ENCODE measurements at regions of chr2 and their contacts with region 1.

Region 1: DNA sequence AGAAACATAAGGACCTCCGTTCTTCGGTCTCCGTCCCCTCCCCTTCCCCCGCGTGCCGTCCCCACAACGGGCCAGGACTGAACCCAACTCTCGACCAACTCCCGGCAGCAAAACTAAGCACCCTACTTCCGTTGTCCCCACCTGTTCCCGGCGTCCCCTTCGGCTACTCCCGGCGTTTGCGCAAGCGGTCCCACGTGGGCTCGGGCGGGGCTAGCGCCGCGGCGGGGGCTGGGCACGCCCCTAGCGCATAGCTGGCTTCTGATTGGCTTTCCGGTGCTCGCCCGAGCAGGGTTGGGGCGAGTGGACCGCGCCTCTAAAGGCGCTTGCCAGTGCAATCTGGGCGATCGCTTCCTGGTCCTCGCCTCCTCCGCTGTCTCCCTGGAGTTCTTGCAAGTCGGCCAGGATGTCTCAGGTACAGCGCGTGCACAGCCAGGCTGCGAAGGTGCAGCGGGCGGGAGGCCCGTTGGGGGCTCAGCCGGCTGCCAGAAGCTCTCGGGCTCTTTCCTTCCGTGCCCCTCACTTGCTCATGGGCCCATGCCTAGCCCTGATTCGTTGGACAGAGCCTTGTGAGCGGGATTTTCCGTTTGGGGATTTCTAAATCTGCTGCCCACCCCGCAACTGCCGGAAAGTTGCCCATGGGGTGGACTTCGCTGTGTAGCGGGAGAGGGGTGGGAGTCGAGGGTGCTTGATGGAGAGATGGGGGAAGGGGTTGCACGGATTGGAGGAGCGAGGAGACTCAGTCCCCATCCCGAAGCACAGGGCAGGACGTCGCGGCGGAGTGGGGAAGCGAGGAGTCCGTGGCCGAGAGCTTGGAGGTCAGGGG is at the starts of genes C2orf76 and DBI:
- DNase-seq: peak; percentile 94
- ATAC-seq: peak; percentile 92
- H3K4me3 Mint-ChIP-seq: peak within 1 kb of the TSS; percentile 100
- H3K27ac Mint-ChIP-seq: peak within 1 kb of the TSS; percentile 100
- H3K4me1 Mint-ChIP-seq: peaks cover 50% of the 10 kb centered on the region
- H3K27me3 Mint-ChIP-seq: no peaks in the 10 kb centered on the region
- CTCF ChIP-seq: no peak
- total RNA-seq, gene C2orf76: 9.6 to 11.5 TPM
- total RNA-seq, gene DBI: 142 to 143 TPM

Region 2: DNA sequence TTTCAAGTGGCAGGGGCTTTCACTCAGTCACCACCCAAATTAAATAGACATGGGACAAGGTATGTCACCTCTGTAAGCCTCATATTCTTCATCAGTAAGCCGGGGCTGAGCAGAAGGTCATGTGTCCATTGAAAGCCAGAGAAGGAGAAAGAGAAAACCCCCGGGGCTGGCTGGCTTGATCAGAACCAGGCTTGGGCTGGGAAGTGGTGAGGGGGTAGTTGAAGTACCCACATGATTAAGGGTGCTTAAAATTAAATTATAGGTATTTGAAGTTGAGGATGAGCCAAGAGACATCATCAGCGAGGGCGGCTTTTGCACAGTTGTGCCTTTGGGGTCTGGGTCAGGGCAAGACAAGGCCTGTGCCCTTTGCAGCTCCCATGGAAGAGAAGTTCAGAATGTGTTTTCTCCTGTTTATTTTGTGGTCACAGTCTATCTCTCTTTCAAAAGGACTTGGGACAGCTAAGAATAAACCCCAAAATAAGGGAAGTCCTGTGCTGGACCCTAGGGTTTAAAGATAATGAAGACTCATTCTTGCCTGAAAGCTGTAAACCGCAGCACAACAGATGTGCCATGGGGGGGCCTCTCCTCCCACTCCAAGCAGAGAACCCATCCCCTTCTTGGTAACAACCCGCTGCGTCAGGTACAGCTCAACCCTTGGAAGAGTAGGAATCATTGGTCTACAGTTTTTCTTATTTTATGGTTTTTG is 10.6 kb after region 1 on chr2:
- CTCF ChIA-PET with region 1: no interaction called
- POLR2A ChIA-PET with region 1: interaction called, 12 read pairs
- intact Hi-C with region 1: no loop called
- DNase-seq: no peak
- ATAC-seq: no peak
- H3K4me3 Mint-ChIP-seq: no peak overlapping the region
- H3K27ac Mint-ChIP-seq: no peak overlapping the region
- H3K4me1 Mint-ChIP-seq: no peaks in the 10 kb centered on the region
- H3K27me3 Mint-ChIP-seq: peaks cover 3% of the 10 kb centered on the region
- CTCF ChIP-seq: no peak

Region 3: DNA sequence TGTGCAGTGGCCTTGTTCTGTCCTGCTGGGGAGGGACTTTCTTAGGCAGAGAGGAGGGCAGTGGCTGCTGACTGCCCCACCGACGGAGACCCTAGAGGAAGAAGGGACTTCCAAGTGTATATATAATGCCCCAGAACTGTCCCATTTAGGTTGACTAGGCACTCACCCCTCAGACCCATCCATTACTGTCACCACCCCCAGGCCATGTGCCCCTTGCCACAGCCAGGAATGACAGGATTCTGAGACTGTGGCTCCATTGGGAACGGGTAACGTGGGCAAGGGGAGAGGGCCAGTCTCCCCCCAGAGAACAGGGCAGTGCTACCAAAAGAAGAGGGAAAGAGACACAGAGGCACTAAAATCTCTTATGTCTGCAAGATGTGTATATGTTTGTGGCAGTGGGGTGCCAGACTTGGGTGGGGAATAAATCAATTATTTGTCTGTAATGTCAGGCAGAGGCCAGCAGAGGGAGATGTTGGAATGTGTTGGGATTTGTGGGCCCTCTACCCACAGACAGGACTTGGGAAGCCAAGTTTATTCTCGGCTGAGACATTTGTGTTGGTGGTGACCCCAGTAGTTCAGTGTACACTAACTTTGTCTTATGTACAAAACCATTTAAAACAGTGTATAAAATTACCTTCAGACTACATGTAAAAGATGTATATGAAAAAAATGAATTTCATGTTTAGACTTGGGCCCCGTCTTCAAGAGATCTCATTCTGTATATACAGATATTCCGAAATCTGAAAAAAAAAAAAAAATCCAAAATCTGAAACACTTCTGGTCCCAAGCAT is 40.8 kb after region 1 on chr2:
- CTCF ChIA-PET with region 1: no interaction called
- POLR2A ChIA-PET with region 1: no interaction called
- intact Hi-C with region 1: no loop called
- DNase-seq: peak; percentile 42
- ATAC-seq: peak; percentile 66
- H3K4me3 Mint-ChIP-seq: no peak overlapping the region
- H3K27ac Mint-ChIP-seq: no peak overlapping the region
- H3K4me1 Mint-ChIP-seq: no peaks in the 10 kb centered on the region
- H3K27me3 Mint-ChIP-seq: peaks cover 3% of the 10 kb centered on the region
- CTCF ChIP-seq: peak; percentile 72

Measured in activated CD8-positive, alpha-beta T cell treated with anti-CD3 and anti-CD28 coated beads for 36 hours (primary cell).